Sciatic nerve (tissue), 2 donors: ENCODE measurements at regions of chr9 and their contacts with region 1.

Region 1: GRCh38 chr9:35277628-35278359 is 116.0 kb downstream of the UNC13B start:
- DNase-seq: no peak
- ATAC-seq: peak; percentile 96

Region 2: GRCh38 chr9:35140097-35140496 is 137.7 kb before region 1 on chr9:
- intact Hi-C with region 1: loop called (anchors 10 kb)
- DNase-seq: no peak
- ATAC-seq: no peak

Region 3: GRCh38 chr9:35220659-35221338 is 57.0 kb before region 1 on chr9:
- intact Hi-C with region 1: no loop called
- DNase-seq: no peak
- ATAC-seq: no peak